Spleen (tissue), 13 donors: ENCODE measurements at regions of chr22 and their contacts with region 1.

Region 1: GRCh38 chr22:39013942-39014722 is at the start of gene APOBEC3C:
- DNase-seq: peak; percentile 91
- H3K4me3 ChIP-seq: peak within 1 kb of the TSS; percentile 48 to 78 (median 60)
- H3K27ac ChIP-seq: peak within 1 kb of the TSS; percentile 85 to 96 (median 92)
- H3K4me1 ChIP-seq: peaks cover 11 to 66% (median 39%) of the 10 kb centered on the region in 6 donors
- H3K27me3 ChIP-seq: no peaks in the 10 kb centered on the region
- CTCF ChIP-seq: peak in 9 of 11 experiments; percentile 7 to 53 (median 29)
- POLR2A ChIP-seq: peak in 2 of 3 donors; percentile 39 to 68
- total RNA-seq, gene APOBEC3C: 23.5 to 72.4 (median 54.2) TPM

Region 2: GRCh38 chr22:39078329-39078728 is 64.2 kb after region 1 on chr22:
- intact Hi-C with region 1: loop called (anchors 10 kb)
- DNase-seq: no peak
- H3K4me3 ChIP-seq: peak overlapping the region in 7 of 8 donors; percentile 54 to 82 (median 60)
- H3K27ac ChIP-seq: peak overlapping the region; percentile 36 to 96 (median 90)
- H3K4me1 ChIP-seq: peaks cover 20 to 82% (median 56%) of the 10 kb centered on the region in 6 donors
- H3K27me3 ChIP-seq: no peaks in the 10 kb centered on the region
- CTCF ChIP-seq: no peak
- POLR2A ChIP-seq: no peak

Region 3: GRCh38 chr22:39253435-39254070 is 239.4 kb after region 1 on chr22:
- intact Hi-C with region 1: no loop called
- DNase-seq: no peak
- H3K4me3 ChIP-seq: no peak overlapping the region
- H3K27ac ChIP-seq: no peak overlapping the region
- H3K4me1 ChIP-seq: peaks cover 14 to 35% (median 29%) of the 10 kb centered on the region in 6 donors
- H3K27me3 ChIP-seq: peaks cover 0 to 79% (median 21%) of the 10 kb centered on the region in 7 donors
- CTCF ChIP-seq: no peak
- POLR2A ChIP-seq: no peak